Endothelial cell of umbilical vein (primary cell): ENCODE measurements at regions of chr2 and their contacts with region 1.

Region 1: DNA sequence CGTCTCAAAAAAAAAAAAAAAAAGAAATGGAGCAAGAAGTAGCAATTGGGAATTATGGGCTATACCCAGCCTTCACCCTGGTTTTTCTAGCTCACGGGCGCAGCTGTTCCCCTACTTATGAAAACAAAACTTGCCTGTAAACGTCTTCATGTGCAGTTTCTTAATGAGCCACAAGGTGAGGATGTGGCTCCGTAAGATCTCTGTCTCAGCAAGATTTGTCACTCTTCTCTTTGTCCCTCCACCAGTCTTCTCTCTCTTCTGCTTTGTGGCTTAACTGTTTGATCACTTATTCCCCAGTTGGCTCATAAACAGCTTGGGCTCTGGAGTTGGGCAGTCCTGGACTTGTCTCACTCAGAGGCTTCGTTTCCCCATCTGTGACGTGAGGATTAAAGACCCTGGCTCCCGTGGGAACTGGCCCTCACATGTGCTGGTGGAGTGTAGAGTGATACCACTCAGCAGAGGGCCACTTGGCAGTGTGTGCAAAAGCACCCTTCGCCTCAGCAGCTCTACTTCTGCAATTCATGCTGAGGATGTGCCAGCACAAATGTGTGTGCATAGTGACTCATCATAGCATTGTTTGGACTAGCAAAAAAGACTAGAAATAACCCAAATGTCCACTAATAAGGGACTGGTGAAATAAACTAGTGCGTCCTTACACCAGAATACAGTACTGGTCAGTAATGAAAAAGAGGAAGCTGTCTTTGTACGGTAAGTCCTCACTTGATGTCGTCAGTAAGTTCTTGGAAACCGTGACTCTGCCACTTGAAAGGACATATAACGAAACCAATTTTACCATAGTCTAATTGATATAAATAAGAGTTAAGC is 8.7 kb downstream of the CEP68 start:
- DNase-seq: peak; percentile 93
- H3K4me3 ChIP-seq: no peak overlapping the region
- H3K27ac ChIP-seq: peak overlapping the region; percentile 48
- H3K4me1 ChIP-seq: peaks cover 33% of the 10 kb centered on the region
- H3K27me3 ChIP-seq: no peaks in the 10 kb centered on the region
- CTCF ChIP-seq: peak; percentile 54 to 61
- POLR2A ChIP-seq: no peak

Region 2: GRCh38 chr2:65075605-65076344 is 10.8 kb after region 1 on chr2:
- CTCF ChIA-PET with region 1: interaction called, 20 read pairs
- POLR2A ChIA-PET with region 1: no interaction called
- dilution Hi-C with region 1: no loop called
- intact Hi-C with region 1: no loop called
- DNase-seq: peak; percentile 35
- H3K4me3 ChIP-seq: no peak overlapping the region
- H3K27ac ChIP-seq: peak overlapping the region; percentile 10
- H3K4me1 ChIP-seq: peaks cover 18% of the 10 kb centered on the region
- H3K27me3 ChIP-seq: no peaks in the 10 kb centered on the region
- CTCF ChIP-seq: no peak
- POLR2A ChIP-seq: no peak

Region 3: DNA sequence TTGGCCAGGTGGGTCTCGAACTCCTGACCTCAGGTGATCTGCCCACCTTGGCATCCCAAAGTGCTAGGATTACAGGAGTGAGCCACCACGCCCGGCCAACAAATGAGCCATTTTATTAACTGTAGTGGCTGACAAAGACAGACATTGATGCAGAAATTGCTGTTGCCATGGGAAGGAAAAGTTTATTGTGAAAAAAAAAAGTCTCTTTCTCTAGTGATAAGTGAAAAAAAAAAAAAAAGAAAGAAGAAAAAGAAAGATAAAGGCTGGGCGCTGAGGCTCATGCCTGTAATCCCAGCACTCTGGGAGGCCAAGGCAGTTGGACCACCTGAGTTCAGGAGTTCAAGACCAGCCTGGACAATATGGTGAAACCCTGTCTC is 104.8 kb after region 1 on chr2:
- CTCF ChIA-PET with region 1: interaction called, 65 read pairs
- POLR2A ChIA-PET with region 1: interaction called, 4 read pairs
- dilution Hi-C with region 1: no loop called
- intact Hi-C with region 1: loop called (anchors 1 kb)
- DNase-seq: no peak
- H3K4me3 ChIP-seq: no peak overlapping the region
- H3K27ac ChIP-seq: no peak overlapping the region
- H3K4me1 ChIP-seq: no peaks in the 10 kb centered on the region
- H3K27me3 ChIP-seq: peaks cover 0 to 4% of the 10 kb centered on the region in 2 experiments
- CTCF ChIP-seq: no peak
- POLR2A ChIP-seq: no peak